Dorsolateral prefrontal cortex (tissue), 120 donors: ENCODE measurements at regions of chr3 and their contacts with region 1.

Region 1: GRCh38 chr3:52339612-52340011 is 23.5 kb downstream of the DNAH1 start:
- DNase-seq: peak in 2 of 10 donors; percentile 15 to 44
- H3K4me3 ChIP-seq: no peak overlapping the region
- H3K27ac ChIP-seq: peak overlapping the region in 4 of 59 donors; percentile 10 to 19 (median 14)
- H3K27me3 ChIP-seq: no peaks in the 10 kb centered on the region
- CTCF ChIP-seq: peak; percentile 43 to 92 (median 76)

Region 2: DNA sequence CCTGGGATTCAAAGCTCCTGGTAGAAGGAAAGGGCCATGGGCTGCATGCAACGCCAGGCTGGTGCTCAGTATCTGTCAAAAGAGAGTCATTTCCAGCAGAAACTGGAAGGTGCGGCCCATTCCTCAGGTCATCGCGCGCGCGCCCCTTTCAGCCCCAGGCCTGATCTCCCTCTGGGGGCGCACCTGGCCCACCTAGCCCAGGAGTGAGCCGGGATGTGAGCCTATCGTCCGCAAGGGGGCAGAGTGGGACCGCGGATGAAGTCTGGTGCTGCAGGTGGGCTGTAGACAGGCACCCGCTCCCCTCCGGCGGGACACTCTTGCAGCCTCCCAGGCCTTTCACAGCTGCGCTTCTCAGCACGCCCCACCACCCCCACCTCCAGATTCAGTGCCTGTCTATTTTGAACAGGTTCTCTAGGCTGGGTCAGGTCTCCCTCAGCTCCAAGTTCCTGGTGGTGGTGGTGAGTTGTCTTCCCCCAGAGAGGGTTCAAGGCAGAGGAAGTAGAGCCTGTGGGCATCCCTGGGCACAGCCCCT is 338.1 kb before region 1 on chr3:
- intact Hi-C with region 1: loop called in 1 of 2 experiments (anchors 5 kb)
- DNase-seq: peak; percentile 73 to 90 (median 80)
- H3K4me3 ChIP-seq: peak overlapping the region in 3 of 59 donors; percentile 3 to 12 (median 7)
- H3K27ac ChIP-seq: peak overlapping the region in 17 of 59 donors; percentile 1 to 72 (median 41)
- H3K27me3 ChIP-seq: no peaks in the 10 kb centered on the region
- CTCF ChIP-seq: peak; percentile 68 to 99 (median 96)

Region 3: DNA sequence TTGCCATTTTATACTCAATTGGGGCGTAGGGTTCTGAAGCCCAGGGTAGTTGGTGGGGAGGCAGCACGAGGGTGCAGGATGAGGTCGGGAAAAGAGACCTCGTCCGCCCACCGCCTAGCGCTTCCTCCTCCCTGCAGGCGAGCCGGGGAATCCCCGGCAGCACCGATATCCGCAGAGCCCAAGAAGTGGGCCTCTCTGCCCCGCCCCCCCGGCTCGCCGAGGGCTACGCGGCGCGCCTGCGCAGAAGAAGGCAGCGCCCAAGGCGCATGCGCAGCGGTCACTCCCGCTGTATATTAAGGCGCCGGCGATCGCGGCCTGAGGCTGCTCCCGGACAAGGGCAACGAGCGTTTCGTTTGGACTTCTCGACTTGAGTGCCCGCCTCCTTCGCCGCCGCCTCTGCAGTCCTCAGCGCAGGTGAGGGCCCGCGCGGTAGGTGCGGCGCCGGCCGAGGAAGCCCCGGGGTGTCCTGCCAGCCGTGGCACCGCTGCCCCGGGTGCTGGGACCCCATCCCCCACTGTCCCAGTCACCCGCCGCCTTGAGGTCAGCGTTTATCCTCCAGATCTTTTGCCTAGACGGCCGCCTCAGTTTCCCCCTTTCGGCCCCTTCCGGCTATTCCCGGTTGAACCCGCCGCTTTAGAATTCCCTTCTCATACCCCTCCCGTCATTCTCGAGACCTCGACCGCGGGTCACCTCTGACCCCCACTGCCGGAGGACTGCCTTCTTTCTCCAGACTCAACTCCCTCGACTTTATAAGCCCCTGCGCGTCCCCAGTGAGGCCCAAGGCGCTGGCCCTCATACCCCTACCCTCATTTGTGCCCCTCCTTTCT is 141.6 kb before region 1 on chr3 and contains the start of gene ALAS1:
- intact Hi-C with region 1: no loop called
- DNase-seq: peak; percentile 83 to 96 (median 84)
- H3K4me3 ChIP-seq: peak within 1 kb of the TSS; percentile 62 to 100 (median 97)
- H3K27ac ChIP-seq: peak within 1 kb of the TSS in 58 of 59 donors; percentile 75 to 96 (median 89)
- H3K27me3 ChIP-seq: no peaks in the 10 kb centered on the region
- CTCF ChIP-seq: peak in 39 of 56 donors; percentile 8 to 52 (median 31)
- total RNA-seq, gene ALAS1: 34.8 to 81.1 (median 55.4) TPM

Region 4: DNA sequence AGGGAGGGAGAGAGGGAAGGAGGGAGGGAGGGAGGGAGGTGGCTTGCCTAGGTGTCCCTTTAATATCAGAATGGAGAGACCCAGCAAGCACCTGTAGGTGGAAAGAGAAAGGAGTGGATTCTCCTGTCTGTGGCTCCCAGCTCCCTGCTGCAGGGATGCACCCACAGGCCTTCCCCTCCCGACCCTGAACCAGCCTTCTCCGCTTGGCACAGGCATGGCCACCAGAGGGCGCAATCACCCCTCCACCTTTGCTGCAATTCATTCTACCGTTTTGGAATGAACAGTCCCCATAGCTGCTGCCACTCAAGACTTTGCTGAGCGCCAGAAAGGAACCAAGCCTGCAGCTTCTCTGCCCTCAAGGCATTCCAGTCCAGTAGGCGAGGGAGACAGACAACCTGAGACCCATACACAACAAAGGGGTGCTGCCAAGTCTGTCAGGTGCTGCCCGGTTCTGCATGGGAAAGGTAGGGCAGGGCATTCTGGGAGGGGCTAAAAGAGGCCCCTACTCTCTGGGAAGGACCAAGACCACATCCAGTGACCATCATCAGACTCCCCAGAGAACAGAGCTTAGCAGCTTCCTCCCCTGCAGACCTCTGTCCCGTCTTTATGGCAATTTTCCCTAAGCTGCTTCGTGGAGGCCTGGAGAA is 119.1 kb before region 1 on chr3:
- intact Hi-C with region 1: loop called (anchors 2 to 5 kb)
- DNase-seq: peak; percentile 77 to 93 (median 87)
- H3K4me3 ChIP-seq: no peak overlapping the region
- H3K27ac ChIP-seq: peak overlapping the region in 3 of 59 donors; percentile 31 to 48 (median 45)
- H3K27me3 ChIP-seq: no peaks in the 10 kb centered on the region
- CTCF ChIP-seq: peak; percentile 72 to 96 (median 88)

Region 5: GRCh38 chr3:52231502-52232293 is 107.9 kb before region 1 on chr3:
- intact Hi-C with region 1: loop called in 1 of 2 experiments (anchors 5 kb)
- DNase-seq: peak in 3 of 10 donors; percentile 35 to 70 (median 60)
- H3K4me3 ChIP-seq: peak overlapping the region in 17 of 59 donors; percentile 4 to 44 (median 25)
- H3K27ac ChIP-seq: peak overlapping the region in 17 of 59 donors; percentile 3 to 74 (median 48)
- H3K27me3 ChIP-seq: no peaks in the 10 kb centered on the region
- CTCF ChIP-seq: peak in 55 of 56 donors; percentile 38 to 80 (median 70)

Region 6: DNA sequence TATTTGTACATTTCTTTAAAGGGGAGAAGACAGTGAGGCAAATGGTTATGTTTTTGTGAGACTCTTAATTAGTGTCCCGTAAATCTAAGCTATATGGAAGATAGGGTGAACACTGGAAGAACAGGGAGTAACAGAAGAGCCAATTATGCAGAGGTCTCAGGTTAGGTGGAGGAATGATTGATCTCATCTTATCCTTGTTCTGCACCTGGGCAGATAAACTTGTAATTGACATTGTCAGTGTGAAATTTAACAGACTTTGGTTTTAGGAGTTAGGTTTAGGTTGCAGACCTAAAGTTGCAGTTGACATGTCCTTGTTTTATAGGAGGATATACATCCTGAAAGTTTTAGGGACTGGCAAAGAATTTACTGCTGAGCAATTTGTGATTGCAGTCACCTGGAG is 97.6 kb before region 1 on chr3:
- intact Hi-C with region 1: no loop called
- DNase-seq: no peak
- H3K4me3 ChIP-seq: no peak overlapping the region
- H3K27ac ChIP-seq: no peak overlapping the region
- H3K27me3 ChIP-seq: no peaks in the 10 kb centered on the region
- CTCF ChIP-seq: no peak

Region 7: GRCh38 chr3:52268036-52268435 is 71.6 kb before region 1 on chr3:
- intact Hi-C with region 1: no loop called
- DNase-seq: no peak
- H3K4me3 ChIP-seq: no peak overlapping the region
- H3K27ac ChIP-seq: peak overlapping the region in 3 of 59 donors; percentile 18 to 58 (median 44)
- H3K27me3 ChIP-seq: no peaks in the 10 kb centered on the region
- CTCF ChIP-seq: no peak